Activated naive CD4-positive, alpha-beta T cell treated with anti-CD3 and anti-CD28 coated beads for 36 hours (primary cell): ENCODE measurements at regions of chr3 and their contacts with region 1.

Region 1: DNA sequence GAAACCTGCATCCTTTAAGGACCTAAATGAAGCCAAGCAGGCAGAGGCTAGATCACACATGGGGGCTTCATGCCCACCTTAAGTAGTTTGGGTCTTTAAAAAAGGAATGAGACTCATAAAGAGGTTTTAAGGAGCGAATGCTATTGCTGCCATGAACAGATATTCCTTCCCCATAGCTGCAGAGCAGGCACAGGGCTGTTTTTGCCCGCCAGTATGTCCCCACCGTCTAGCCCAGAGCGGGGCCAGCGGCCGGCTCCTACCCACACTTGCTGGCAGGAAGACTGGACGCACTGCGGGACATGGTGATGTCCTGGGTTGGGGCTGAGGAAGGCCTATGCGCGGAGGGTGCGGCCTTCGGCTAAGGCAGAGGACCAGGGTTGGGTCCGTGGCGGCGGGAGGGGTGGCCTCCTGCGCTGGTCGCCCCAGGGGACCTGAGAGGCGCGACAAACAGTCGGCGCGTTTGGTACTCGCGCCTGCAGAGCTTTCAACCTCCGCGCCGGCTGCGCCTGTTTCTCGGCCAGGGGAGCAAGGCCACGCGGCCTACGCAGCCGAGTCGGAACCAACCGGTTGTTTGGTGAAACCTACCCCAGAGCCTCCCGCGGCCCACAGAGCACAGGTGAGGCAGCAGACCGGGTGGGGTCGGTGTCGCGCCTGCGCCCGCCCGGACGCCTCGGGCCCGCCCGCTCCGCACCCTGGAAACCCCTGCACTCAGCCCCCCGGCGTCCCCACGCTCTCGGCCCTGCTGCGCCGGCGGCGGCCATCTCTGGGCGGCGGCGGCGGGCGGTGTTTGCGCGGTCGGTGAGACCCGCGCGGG is at the start of gene FAIM:
- DNase-seq: peak; percentile 64
- H3K4me3 Mint-ChIP-seq: peak within 1 kb of the TSS; percentile 73
- H3K27ac Mint-ChIP-seq: peak within 1 kb of the TSS; percentile 79
- H3K4me1 Mint-ChIP-seq: peaks cover 10% of the 10 kb centered on the region
- H3K27me3 Mint-ChIP-seq: no peaks in the 10 kb centered on the region
- total RNA-seq, gene FAIM: 2.2 to 3.4 TPM

Region 2: DNA sequence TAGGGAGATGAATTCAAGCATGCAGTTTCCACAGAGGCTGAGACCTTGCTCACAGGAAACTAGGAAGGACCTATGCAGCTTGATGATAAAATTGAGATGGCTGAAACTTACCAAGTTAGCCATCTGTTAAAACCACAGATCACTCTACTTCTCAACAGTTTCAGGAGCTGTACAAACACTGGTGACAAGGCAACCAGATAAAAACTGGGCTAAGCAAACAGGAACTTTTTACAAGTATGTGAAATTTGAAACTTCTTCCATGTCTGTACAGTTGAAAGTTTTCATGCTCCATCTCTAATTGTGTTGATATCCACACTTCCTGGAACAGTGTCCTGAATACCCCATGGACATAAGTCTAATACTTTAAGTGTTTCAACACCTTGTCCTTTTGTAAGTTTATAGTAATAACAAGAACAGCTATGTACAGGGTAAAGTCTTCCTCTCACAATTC is 78.3 kb after region 1 on chr3:
- CTCF ChIA-PET with region 1: no interaction called
- intact Hi-C with region 1: loop called (anchors 5 kb)
- DNase-seq: no peak
- H3K4me3 Mint-ChIP-seq: no peak overlapping the region
- H3K27ac Mint-ChIP-seq: peak overlapping the region; percentile 61
- H3K4me1 Mint-ChIP-seq: peaks cover 15% of the 10 kb centered on the region
- H3K27me3 Mint-ChIP-seq: no peaks in the 10 kb centered on the region

Region 3: GRCh38 chr3:139024968-139025367 is 416.4 kb after region 1 on chr3:
- CTCF ChIA-PET with region 1: no interaction called
- intact Hi-C with region 1: no loop called
- DNase-seq: no peak
- H3K4me3 Mint-ChIP-seq: no peak overlapping the region
- H3K27ac Mint-ChIP-seq: no peak overlapping the region
- H3K4me1 Mint-ChIP-seq: no peaks in the 10 kb centered on the region
- H3K27me3 Mint-ChIP-seq: peaks cover 8% of the 10 kb centered on the region

Region 4: DNA sequence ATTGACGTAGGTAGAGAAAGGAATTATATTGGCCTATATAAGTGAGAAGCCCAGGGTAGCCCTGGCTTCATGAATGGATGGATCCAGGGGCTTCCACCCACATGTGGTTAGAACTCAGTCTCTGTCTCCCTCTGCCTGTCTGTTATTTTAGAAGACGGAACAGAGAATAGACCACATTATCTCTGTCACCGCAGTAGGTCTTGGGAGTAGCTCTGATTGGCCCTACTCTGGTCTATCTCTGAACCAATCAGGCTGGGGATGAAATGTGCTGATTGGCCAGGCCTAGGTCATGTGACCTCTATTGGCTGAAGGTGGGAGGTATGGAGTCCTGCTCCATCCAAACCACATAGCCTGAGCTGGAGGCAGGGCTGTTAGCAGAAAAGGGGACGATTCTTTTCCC is 579.1 kb after region 1 on chr3:
- CTCF ChIA-PET with region 1: no interaction called
- intact Hi-C with region 1: no loop called
- DNase-seq: no peak
- H3K4me3 Mint-ChIP-seq: no peak overlapping the region
- H3K27ac Mint-ChIP-seq: no peak overlapping the region
- H3K4me1 Mint-ChIP-seq: no peaks in the 10 kb centered on the region
- H3K27me3 Mint-ChIP-seq: no peaks in the 10 kb centered on the region

Region 5: DNA sequence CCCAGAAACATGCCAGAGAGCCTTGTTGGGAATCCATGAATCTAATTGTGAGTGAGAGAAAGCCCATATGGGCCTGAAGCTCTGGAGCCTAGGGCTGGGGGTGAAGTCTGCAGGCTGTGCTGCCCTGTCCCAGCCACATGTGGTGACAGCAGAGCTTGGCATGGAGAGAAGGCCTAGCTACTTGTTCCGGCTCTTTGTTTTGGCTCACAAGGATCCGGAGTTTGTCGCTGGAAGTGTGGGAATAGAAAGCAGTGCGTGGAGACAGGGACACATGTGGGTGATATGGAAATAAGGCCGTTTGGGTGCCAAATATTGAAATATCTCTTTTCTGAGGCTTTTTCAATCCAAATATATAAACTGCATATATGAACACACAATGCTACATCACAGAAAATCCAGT is 1404.7 kb after region 1 on chr3:
- CTCF ChIA-PET with region 1: no interaction called
- intact Hi-C with region 1: no loop called
- DNase-seq: no peak
- H3K4me3 Mint-ChIP-seq: no peak overlapping the region
- H3K27ac Mint-ChIP-seq: no peak overlapping the region
- H3K4me1 Mint-ChIP-seq: no peaks in the 10 kb centered on the region
- H3K27me3 Mint-ChIP-seq: peaks cover 8% of the 10 kb centered on the region